ENCODE measurements at regions of chr1 and their contacts with region 1.

Region 1: GRCh38 chr1:67390041-67390887 is 39.9 kb downstream of the SERBP1 start:
- DNase-seq: peak; percentile 41 to 86
- H3K4me3 ChIP-seq: no peak overlapping the region
- H3K27ac ChIP-seq: peak overlapping the region; percentile 62
- H3K4me1 ChIP-seq: peaks cover 23% of the 10 kb centered on the region
- H3K27me3 ChIP-seq: no peaks in the 10 kb centered on the region
- CTCF ChIP-seq: no peak

Region 2: GRCh38 chr1:67376381-67376780 is 13.9 kb before region 1 on chr1:
- CTCF ChIA-PET with region 1: no interaction called
- POLR2A ChIA-PET with region 1: interaction called, 6 read pairs
- intact Hi-C with region 1: loop called (anchors 1 kb)
- DNase-seq: peak; percentile 72 to 89
- H3K4me3 ChIP-seq: no peak overlapping the region
- H3K27ac ChIP-seq: 0 out of 2 replicates have a peak overlapping the region, but pooled peaks have one; percentile 13
- H3K4me1 ChIP-seq: peaks cover 37% of the 10 kb centered on the region
- H3K27me3 ChIP-seq: no peaks in the 10 kb centered on the region
- CTCF ChIP-seq: no peak

Region 3: DNA sequence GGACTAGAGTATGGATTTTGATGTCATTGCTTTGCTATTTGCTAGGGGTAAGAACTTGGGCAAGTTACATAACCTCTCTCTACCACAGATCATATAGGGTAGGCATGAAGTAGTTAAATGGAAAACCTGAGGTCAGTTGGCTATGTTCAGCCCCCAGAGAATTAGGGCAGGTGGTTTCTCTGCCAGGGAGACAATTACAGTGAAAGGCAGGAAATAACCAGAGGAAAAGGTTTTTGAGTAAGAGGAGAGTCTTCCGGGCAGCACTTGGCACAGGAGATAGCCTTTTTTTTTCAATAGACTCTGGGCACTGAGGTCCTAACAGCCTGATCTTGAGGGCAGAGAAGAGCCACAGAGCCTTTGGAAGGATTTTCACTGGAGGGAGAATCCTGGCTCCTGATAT is 56.6 kb after region 1 on chr1:
- CTCF ChIA-PET with region 1: no interaction called
- POLR2A ChIA-PET with region 1: no interaction called
- intact Hi-C with region 1: no loop called
- DNase-seq: no peak
- H3K4me3 ChIP-seq: no peak overlapping the region
- H3K27ac ChIP-seq: no peak overlapping the region
- H3K4me1 ChIP-seq: no peaks in the 10 kb centered on the region
- H3K27me3 ChIP-seq: no peaks in the 10 kb centered on the region
- CTCF ChIP-seq: no peak